Activated CD4-positive, alpha-beta memory T cell treated with anti-CD3 and anti-CD28 coated beads, Interleukin-2, amount 10 ng/mL, durations not matched to agents 7 days and 5 days (primary cell): ENCODE measurements at regions of chr14 and their contacts with region 1.

Region 1: GRCh38 chr14:61475316-61475715 is 153.9 kb downstream of the PRKCH start:
- DNase-seq: no peak
- H3K4me3 Mint-ChIP-seq: no peak overlapping the region
- H3K27ac Mint-ChIP-seq: peak overlapping the region; percentile 89
- H3K4me1 Mint-ChIP-seq: peaks cover 95% of the 10 kb centered on the region
- H3K27me3 Mint-ChIP-seq: no peaks in the 10 kb centered on the region

Region 2: DNA sequence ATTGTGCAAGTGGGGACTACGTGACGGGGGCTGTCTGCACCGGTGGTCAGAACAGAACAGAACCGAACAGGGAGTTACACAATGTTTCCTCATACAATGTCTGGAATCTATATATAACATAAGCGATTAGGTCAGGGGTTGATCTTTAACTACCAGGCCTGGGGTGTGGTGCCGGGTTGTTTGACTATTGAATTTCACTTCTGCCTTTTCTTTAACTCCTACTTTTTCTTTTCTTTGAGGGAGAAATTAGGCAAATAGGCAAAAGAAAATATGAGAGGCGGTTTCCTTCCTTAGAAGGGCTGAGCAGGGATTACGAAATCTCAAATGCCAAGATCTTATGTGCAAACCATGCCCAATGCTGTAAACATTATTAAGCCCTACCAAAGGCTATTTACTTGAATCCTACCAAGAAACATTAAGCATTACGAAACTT is 353.9 kb before region 1 on chr14:
- CTCF ChIA-PET with region 1: no interaction called
- POLR2A ChIA-PET with region 1: no interaction called
- DNase-seq: no peak
- H3K4me3 Mint-ChIP-seq: no peak overlapping the region
- H3K27ac Mint-ChIP-seq: no peak overlapping the region
- H3K4me1 Mint-ChIP-seq: peaks cover 26% of the 10 kb centered on the region
- H3K27me3 Mint-ChIP-seq: no peaks in the 10 kb centered on the region

Region 3: GRCh38 chr14:61342486-61342885 is 132.8 kb before region 1 on chr14:
- CTCF ChIA-PET with region 1: interaction called, 4 read pairs
- POLR2A ChIA-PET with region 1: interaction called, 14 read pairs
- DNase-seq: peak; percentile 91
- H3K4me3 Mint-ChIP-seq: peak overlapping the region; percentile 62
- H3K27ac Mint-ChIP-seq: peak overlapping the region; percentile 95
- H3K4me1 Mint-ChIP-seq: peaks cover 94% of the 10 kb centered on the region
- H3K27me3 Mint-ChIP-seq: no peaks in the 10 kb centered on the region

Region 4: DNA sequence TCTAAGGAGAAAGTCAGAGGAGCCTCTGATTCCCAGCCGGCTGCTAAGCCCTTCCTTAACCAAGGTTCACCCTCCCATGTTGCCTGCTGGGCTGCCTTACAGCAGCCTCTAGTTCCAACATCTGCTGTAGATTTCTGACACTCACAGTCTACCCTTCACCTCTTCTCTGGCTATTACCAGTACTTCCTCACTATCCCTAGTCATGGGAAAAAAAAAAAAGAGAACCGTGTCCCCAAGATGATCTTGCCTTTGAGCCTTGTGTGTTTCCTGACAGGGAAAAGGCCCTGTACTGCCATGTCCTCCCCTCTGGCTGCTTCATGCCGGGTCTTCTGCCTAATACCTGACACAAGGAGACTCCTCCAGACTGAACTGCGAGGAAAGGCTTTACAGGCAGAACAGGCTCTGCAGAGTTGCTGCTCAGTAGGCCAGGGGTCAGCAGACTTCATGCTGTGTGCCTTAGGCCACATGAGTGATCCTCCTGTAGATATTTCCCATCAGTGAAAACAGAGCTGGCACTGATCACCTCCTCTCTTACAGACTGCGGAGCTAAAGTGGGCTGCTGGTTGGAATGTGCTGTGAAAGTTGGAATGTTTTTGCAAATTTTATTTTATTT is 107.1 kb before region 1 on chr14:
- CTCF ChIA-PET with region 1: no interaction called
- POLR2A ChIA-PET with region 1: no interaction called
- DNase-seq: no peak
- H3K4me3 Mint-ChIP-seq: no peak overlapping the region
- H3K27ac Mint-ChIP-seq: peak overlapping the region; percentile 47
- H3K4me1 Mint-ChIP-seq: peaks cover 49% of the 10 kb centered on the region
- H3K27me3 Mint-ChIP-seq: no peaks in the 10 kb centered on the region

Region 5: DNA sequence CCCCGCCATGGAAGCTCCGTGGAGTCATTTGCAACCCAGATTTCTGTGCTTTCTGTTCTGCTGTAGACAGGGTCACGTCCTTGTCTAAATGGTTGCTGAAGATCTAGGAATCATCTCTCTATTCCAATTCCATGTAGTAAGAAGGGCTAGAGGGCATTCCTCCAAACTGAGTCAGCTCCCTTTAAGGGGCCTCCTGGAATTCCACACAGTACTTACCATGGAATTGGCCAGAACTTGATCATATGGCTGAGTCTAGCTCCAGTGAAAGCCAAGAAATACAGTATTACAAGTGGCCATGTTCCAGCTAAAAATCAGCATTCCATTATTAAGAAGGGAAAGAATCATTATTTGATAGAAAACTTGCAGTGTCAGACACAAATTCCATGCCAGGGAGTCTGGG is 17.9 kb after region 1 on chr14:
- CTCF ChIA-PET with region 1: interaction called, 3 read pairs
- POLR2A ChIA-PET with region 1: interaction called, 11 read pairs
- DNase-seq: no peak
- H3K4me3 Mint-ChIP-seq: no peak overlapping the region
- H3K27ac Mint-ChIP-seq: no peak overlapping the region
- H3K4me1 Mint-ChIP-seq: peaks cover 8% of the 10 kb centered on the region
- H3K27me3 Mint-ChIP-seq: no peaks in the 10 kb centered on the region

Region 6: GRCh38 chr14:61553725-61554641 is 78.7 kb after region 1 on chr14:
- CTCF ChIA-PET with region 1: interaction called, 5 read pairs
- POLR2A ChIA-PET with region 1: interaction called, 13 read pairs
- DNase-seq: no peak
- H3K4me3 Mint-ChIP-seq: no peak overlapping the region
- H3K27ac Mint-ChIP-seq: peak overlapping the region; percentile 90
- H3K4me1 Mint-ChIP-seq: peaks cover 46% of the 10 kb centered on the region
- H3K27me3 Mint-ChIP-seq: no peaks in the 10 kb centered on the region

Region 7: GRCh38 chr14:61750708-61751474 is 275.6 kb after region 1 on chr14:
- CTCF ChIA-PET with region 1: interaction called, 12 read pairs
- POLR2A ChIA-PET with region 1: interaction called, 9 read pairs
- DNase-seq: peak; percentile 88
- H3K4me3 Mint-ChIP-seq: peak overlapping the region; percentile 88
- H3K27ac Mint-ChIP-seq: peak overlapping the region; percentile 71
- H3K4me1 Mint-ChIP-seq: peaks cover 40% of the 10 kb centered on the region
- H3K27me3 Mint-ChIP-seq: peaks cover 6% of the 10 kb centered on the region